ENCODE measurements at regions of chr5 and their contacts with region 1.

Region 1: DNA sequence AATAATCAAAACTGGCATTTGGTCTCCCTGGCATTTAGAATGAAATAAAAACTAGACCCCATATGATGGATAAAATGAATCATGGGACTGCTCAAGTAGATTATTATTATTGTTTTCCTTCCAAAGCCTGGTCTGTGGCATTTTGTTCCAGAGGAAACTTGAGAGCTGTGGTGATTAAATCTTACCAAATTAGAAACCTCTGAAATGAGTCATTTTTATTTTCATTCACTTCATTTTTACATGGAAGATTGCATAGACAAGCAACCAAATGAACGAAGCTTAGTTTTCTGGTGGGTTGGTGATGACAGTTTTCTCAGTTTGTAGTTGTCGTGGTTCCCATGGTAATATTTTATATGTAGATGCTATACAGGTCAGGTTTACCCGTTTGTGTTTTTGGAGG is 23.4 kb downstream of the PAM start:
- DNase-seq: no peak
- ATAC-seq: no peak
- H3K4me3 ChIP-seq: no peak overlapping the region
- H3K4me3 Mint-ChIP-seq: no peak overlapping the region
- H3K27ac ChIP-seq: no peak overlapping the region
- H3K27ac Mint-ChIP-seq: peak overlapping the region in 1 of 9 donors; percentile 15
- H3K4me1 ChIP-seq: no peaks in the 10 kb centered on the region
- H3K4me1 Mint-ChIP-seq: peaks cover 0 to 41% (median 15%) of the 10 kb centered on the region in 7 donors
- H3K27me3 ChIP-seq: no peaks in the 10 kb centered on the region
- H3K27me3 Mint-ChIP-seq: no peaks in the 10 kb centered on the region

Region 2: DNA sequence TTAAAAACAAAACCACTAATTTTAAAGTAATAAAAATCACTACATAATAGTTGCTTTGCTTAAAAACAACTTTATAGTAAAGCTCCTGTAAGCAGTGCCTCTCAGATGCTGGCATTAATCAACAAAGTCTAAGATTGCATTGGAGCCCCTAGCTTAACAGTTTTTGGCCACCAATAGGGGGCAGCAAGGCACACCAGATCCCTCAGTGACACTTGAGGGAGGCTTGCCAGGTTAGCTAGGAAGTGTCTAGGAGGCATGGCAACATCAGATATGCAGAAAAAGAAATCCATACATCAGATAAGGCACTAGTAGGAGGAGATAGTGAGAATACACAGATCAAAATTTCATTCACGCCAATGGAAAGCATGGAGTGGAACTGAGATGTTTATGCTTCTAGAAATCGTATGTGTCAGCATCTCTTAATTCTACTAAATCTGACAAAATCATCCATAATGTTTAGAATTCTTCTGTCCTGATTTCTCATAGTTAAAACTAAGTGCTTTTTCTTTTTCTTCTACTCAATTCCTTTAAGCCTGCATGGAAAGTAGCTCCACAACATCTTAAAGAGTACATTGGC is 97.0 kb before region 1 on chr5:
- CTCF ChIA-PET with region 1: no interaction called
- POLR2A ChIA-PET with region 1: no interaction called
- intact Hi-C with region 1: loop called in 1 of 2 experiments (anchors 2 kb)
- DNase-seq: peak in 7 of 9 donors; percentile 7 to 60 (median 25)
- ATAC-seq: peak; percentile 63
- H3K4me3 ChIP-seq: no peak overlapping the region
- H3K4me3 Mint-ChIP-seq: no peak overlapping the region
- H3K27ac ChIP-seq: no peak overlapping the region
- H3K27ac Mint-ChIP-seq: no peak overlapping the region
- H3K4me1 ChIP-seq: no peaks in the 10 kb centered on the region
- H3K4me1 Mint-ChIP-seq: no peaks in the 10 kb centered on the region
- H3K27me3 ChIP-seq: no peaks in the 10 kb centered on the region
- H3K27me3 Mint-ChIP-seq: peaks cover 0 to 7% (median 4%) of the 10 kb centered on the region in 5 donors

Region 3: DNA sequence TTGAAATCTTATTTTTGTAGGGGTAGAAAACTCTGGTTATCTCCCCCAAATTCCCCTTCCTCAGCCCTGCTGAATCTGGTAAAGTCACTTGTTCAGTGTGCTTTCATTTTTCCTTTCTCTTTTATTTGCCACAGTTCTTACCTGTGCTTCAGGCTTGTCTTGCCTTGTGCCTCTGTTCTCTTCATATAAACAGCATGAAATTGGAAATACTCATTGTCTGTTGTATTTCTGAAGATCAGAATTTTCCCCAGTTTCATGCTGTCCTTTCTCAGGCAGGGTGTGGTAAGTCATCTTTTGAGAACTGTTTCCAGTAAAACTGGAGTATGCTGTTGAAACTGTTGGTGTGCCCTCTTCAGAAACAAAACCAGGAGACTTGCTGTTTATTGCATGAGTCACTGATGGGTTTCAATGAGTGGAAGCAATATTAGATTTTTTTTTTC is 16.4 kb before region 1 on chr5:
- CTCF ChIA-PET with region 1: interaction called, 3 read pairs
- POLR2A ChIA-PET with region 1: no interaction called
- intact Hi-C with region 1: loop called in 1 of 2 experiments (anchors 1 kb)
- DNase-seq: no peak
- ATAC-seq: peak; percentile 32
- H3K4me3 ChIP-seq: peak overlapping the region; percentile 22
- H3K4me3 Mint-ChIP-seq: peak overlapping the region in 6 of 10 donors; percentile 2 to 85 (median 40)
- H3K27ac ChIP-seq: no peak overlapping the region
- H3K27ac Mint-ChIP-seq: peak overlapping the region in 3 of 9 donors; percentile 23 to 87 (median 28)
- H3K4me1 ChIP-seq: peaks cover 5 to 46% of the 10 kb centered on the region in 2 donors
- H3K4me1 Mint-ChIP-seq: peaks cover 24 to 66% (median 48%) of the 10 kb centered on the region in 7 donors
- H3K27me3 ChIP-seq: no peaks in the 10 kb centered on the region
- H3K27me3 Mint-ChIP-seq: no peaks in the 10 kb centered on the region

Region 4: GRCh38 chr5:103041071-103041676 is 262.7 kb after region 1 on chr5:
- CTCF ChIA-PET with region 1: no interaction called
- POLR2A ChIA-PET with region 1: no interaction called
- intact Hi-C with region 1: loop called (anchors 1 to 2 kb)
- DNase-seq: peak in 5 of 9 donors; percentile 3 to 24 (median 11)
- ATAC-seq: no peak
- H3K4me3 ChIP-seq: no peak overlapping the region
- H3K4me3 Mint-ChIP-seq: no peak overlapping the region
- H3K27ac ChIP-seq: no peak overlapping the region
- H3K27ac Mint-ChIP-seq: no peak overlapping the region
- H3K4me1 ChIP-seq: no peaks in the 10 kb centered on the region
- H3K4me1 Mint-ChIP-seq: no peaks in the 10 kb centered on the region
- H3K27me3 ChIP-seq: no peaks in the 10 kb centered on the region
- H3K27me3 Mint-ChIP-seq: peaks cover 3 to 39% (median 13%) of the 10 kb centered on the region in 5 donors

Region 5: DNA sequence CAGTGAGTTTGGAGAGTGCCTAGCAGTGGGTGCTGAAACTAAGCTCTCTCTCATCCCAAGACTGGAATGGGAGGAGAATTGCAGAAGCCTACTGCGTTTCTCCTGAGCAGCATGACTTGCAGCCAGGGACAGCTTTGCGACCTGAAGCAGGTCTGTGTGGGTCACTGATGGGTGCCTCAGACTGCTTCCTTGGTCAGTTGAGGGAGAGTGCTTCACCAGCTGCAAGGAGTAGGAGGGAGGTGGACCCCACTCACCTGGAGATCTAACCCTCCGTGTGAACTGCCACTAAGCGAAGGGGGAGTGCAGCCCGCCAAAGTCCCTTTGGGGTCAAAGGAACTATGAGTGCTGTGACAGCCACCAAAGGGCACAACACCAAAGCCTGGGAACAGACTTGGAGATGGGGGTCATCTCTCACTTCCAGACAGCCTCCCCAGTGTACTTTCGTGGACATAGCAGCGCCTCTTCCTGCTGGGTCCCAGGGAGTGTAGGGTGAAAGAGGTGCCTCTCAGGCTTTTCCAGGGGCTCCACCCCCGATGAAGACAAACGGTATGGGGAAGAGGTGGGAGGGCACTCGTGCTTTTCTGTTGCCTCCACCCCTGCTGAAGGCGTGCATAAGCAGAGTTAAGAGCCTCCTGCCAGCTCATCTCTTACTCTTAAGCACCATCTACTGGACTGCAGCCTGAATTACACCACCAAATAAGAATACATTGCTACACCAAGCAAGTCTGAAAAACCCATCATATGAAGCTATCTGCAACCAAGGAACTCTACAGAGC is 445.8 kb after region 1 on chr5:
- CTCF ChIA-PET with region 1: no interaction called
- POLR2A ChIA-PET with region 1: no interaction called
- intact Hi-C with region 1: loop called (anchors 1 to 5 kb)
- DNase-seq: peak in 8 of 9 donors; percentile 10 to 60 (median 38)
- ATAC-seq: peak; percentile 97
- H3K4me3 ChIP-seq: no peak overlapping the region
- H3K4me3 Mint-ChIP-seq: peak overlapping the region in 1 of 10 donors; percentile 21
- H3K27ac ChIP-seq: no peak overlapping the region
- H3K27ac Mint-ChIP-seq: no peak overlapping the region
- H3K4me1 ChIP-seq: no peaks in the 10 kb centered on the region
- H3K4me1 Mint-ChIP-seq: peaks cover 0 to 5% (median 0%) of the 10 kb centered on the region in 7 donors
- H3K27me3 ChIP-seq: peaks cover 0 to 4% of the 10 kb centered on the region in 2 donors
- H3K27me3 Mint-ChIP-seq: peaks cover 11 to 46% (median 27%) of the 10 kb centered on the region in 5 donors

Measured in naive thymus-derived CD4-positive, alpha-beta T cell (primary cell).